Heart right ventricle (tissue), 16 donors: ENCODE measurements at regions of chr4 and their contacts with region 1.

Region 1: DNA sequence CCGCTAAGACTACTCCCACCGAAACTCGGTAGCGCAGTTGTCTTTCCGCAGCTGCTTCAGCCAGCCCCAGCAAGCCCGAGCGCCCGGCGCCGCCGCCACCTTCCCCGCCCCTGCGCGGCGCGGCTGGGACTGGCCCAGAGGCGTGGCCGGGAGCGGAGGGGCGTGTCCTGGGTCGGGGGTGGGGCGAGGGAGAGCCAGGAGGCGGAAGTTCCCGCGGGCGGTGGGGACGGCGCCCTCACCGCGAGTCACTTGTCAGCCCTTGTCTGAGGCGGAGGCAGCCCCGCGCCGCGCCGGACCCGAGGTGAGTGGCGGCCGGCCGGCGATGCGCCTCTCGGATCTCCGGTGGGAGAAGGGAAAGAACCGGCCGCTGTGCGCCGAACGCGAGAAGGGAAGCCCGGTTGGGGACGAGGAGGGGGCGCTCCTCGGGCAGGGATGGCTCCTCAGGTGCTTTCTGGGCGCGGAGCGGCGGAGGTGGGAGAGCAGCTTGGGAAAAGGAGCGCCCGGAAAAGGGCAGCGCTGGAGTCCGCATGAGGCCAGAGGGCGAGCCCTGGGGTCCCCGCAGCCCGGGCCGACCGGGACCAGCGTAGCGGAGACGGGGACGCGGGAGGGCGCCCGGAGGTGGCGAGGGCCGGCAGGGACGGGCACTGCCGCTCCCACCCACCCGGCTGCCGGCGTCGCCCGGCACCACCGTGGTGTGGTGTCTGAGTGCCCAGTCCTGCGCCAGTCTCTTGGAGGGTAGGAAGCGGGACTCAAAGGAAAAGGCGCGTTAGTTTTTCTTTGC is at the start of gene PDLIM5:
- DNase-seq: peak; percentile 92
- ATAC-seq: peak; percentile 91 to 97 (median 94)
- H3K4me3 ChIP-seq: peak within 1 kb of the TSS; percentile 91 to 99 (median 96)
- H3K27ac ChIP-seq: peak within 1 kb of the TSS; percentile 97 to 100 (median 99)
- H3K4me1 ChIP-seq: peaks cover 0 to 47% (median 24%) of the 10 kb centered on the region in 9 donors
- H3K27me3 ChIP-seq: no peaks in the 10 kb centered on the region
- CTCF ChIP-seq: peak in 2 of 9 donors; percentile 5 to 20
- total RNA-seq, gene PDLIM5: 856 to 1,549 (median 1,274) TPM

Region 2: GRCh38 chr4:94412658-94413038 is 39.2 kb before region 1 on chr4:
- intact Hi-C with region 1: loop called (anchors 1 to 10 kb)
- DNase-seq: peak in 1 of 2 donors; percentile 30
- ATAC-seq: peak in 2 of 8 donors; percentile 12 to 29
- H3K4me3 ChIP-seq: peak overlapping the region in 5 of 10 donors; percentile 4 to 28 (median 6)
- H3K27ac ChIP-seq: peak overlapping the region; percentile 59 to 92 (median 85)
- H3K4me1 ChIP-seq: peaks cover 7 to 59% (median 37%) of the 10 kb centered on the region in 9 donors
- H3K27me3 ChIP-seq: no peaks in the 10 kb centered on the region
- CTCF ChIP-seq: no peak

Region 3: DNA sequence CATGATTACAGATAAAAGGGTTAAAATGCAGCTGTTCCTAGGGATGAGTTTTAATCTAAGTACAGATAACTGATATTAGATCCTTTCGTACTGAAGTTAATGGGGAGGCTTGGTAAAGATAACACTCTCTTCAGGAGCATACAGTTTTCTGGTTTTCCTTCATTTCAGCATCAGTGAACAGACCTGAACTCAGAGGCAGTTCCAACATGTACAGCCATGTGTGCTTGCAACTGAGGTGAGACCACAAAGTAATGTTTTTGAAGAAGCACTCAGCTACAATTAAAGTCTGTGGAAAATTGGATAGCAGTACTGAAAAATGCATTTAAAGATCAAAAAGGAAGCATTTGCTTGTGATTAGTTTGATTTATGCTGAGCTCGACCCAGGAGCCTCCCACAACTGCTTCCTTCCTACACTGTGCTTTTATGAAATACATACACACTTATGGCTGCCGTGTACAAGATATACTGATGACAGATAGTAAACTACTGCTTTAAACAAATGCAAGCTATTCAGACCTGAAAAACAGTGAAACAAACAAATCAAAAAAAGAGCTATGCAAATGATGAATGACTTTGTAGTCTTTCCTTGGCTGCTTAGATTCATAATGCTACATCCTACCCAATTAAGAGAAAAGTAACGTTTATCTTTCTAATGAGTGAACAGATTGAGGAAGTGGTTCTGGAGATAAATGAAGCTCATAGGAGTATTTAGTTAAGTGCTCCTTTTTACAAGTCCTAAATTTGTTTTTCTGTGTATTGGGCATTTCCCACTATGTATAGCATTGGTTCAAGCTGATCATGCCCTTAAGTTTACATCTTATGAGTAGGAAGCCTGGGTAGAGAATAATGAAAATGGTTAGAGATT is 68.3 kb after region 1 on chr4:
- intact Hi-C with region 1: loop called in 1 of 10 experiments (anchors 5 kb)
- DNase-seq: no peak
- ATAC-seq: peak in 1 of 8 donors; percentile 32
- H3K4me3 ChIP-seq: no peak overlapping the region
- H3K27ac ChIP-seq: peak overlapping the region in 6 of 10 donors; percentile 25 to 74 (median 56)
- H3K4me1 ChIP-seq: peaks cover 13 to 98% (median 86%) of the 10 kb centered on the region in 9 donors
- H3K27me3 ChIP-seq: no peaks in the 10 kb centered on the region
- CTCF ChIP-seq: no peak

Region 4: GRCh38 chr4:94561249-94562024 is 109.6 kb after region 1 on chr4:
- intact Hi-C with region 1: loop called in 4 of 10 experiments (anchors 5 to 10 kb)
- DNase-seq: no peak
- ATAC-seq: peak; percentile 20 to 63 (median 62)
- H3K4me3 ChIP-seq: no peak overlapping the region
- H3K27ac ChIP-seq: peak overlapping the region; percentile 19 to 76 (median 58)
- H3K4me1 ChIP-seq: peaks cover 4 to 83% (median 67%) of the 10 kb centered on the region in 9 donors
- H3K27me3 ChIP-seq: no peaks in the 10 kb centered on the region
- CTCF ChIP-seq: no peak

Region 5: GRCh38 chr4:94590493-94590892 is 138.6 kb after region 1 on chr4:
- intact Hi-C with region 1: loop called in 4 of 10 experiments (anchors 5 to 10 kb)
- DNase-seq: no peak
- ATAC-seq: peak; percentile 46 to 81 (median 54)
- H3K4me3 ChIP-seq: no peak overlapping the region
- H3K27ac ChIP-seq: peak overlapping the region in 3 of 10 donors; percentile 4 to 21 (median 14)
- H3K4me1 ChIP-seq: peaks cover 3 to 47% (median 28%) of the 10 kb centered on the region in 9 donors
- H3K27me3 ChIP-seq: no peaks in the 10 kb centered on the region
- CTCF ChIP-seq: no peak

Region 6: GRCh38 chr4:94605241-94605805 is 153.4 kb after region 1 on chr4:
- intact Hi-C with region 1: no loop called
- DNase-seq: no peak
- ATAC-seq: peak in 5 of 8 donors; percentile 4 to 26 (median 13)
- H3K4me3 ChIP-seq: no peak overlapping the region
- H3K27ac ChIP-seq: peak overlapping the region in 2 of 10 donors; percentile 13 to 18
- H3K4me1 ChIP-seq: peaks cover 0 to 41% (median 21%) of the 10 kb centered on the region in 9 donors
- H3K27me3 ChIP-seq: no peaks in the 10 kb centered on the region
- CTCF ChIP-seq: no peak